CD14-positive monocyte (primary cell): ENCODE measurements at regions of chr20 and their contacts with region 1.

Region 1: DNA sequence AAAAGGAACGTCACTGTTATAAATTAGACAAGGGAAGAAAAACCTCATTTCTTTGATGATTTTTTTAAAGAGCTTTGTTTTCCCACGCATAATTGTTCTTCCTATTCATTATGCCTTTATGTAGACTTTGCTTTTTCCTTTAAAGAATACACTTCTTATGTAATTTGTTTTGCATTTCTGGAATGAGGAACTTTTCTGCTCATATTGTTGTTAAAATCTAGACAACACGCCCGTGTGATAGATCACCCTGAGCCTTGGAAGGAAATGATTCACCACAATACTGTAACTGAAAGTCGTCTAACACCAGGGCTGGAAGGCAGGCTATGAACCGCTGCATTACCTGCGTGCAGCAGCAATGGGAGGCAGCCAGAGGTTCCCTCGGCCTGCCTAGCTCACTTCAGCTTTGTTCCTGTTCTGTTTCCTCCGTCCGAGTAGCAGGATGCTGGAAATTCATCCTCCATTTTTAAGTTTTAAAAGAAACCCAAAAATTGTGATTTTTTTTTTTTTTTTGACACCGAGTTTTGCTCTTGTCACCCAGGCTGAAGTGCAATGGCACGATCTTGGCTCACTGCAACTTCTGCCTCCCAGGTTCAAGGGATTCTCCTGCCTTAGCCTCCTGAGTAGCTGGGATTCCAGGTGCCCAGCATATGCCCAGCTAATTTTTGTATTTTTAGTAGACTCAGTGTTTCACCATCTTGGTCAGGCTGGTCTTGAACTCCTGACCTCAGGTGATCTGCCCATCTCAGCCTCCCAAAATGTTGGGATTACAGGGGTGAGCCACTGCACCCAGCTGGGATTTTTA is 49.6 kb upstream of the ZNF217 start:
- DNase-seq: peak; percentile 88 to 97 (median 92)
- H3K4me3 ChIP-seq: peak overlapping the region; percentile 24 to 64 (median 41)
- H3K4me3 Mint-ChIP-seq: peak overlapping the region; percentile 70 to 83
- H3K27ac ChIP-seq: peak overlapping the region; percentile 80 to 96
- H3K27ac Mint-ChIP-seq: peak overlapping the region; percentile 94 to 98 (median 96)
- H3K4me1 ChIP-seq: peaks cover 48 to 68% of the 10 kb centered on the region in 2 donors
- H3K4me1 Mint-ChIP-seq: peaks cover 56% of the 10 kb centered on the region
- H3K27me3 ChIP-seq: no peaks in the 10 kb centered on the region
- H3K27me3 Mint-ChIP-seq: no peaks in the 10 kb centered on the region
- CTCF ChIP-seq: no peak

Region 2: DNA sequence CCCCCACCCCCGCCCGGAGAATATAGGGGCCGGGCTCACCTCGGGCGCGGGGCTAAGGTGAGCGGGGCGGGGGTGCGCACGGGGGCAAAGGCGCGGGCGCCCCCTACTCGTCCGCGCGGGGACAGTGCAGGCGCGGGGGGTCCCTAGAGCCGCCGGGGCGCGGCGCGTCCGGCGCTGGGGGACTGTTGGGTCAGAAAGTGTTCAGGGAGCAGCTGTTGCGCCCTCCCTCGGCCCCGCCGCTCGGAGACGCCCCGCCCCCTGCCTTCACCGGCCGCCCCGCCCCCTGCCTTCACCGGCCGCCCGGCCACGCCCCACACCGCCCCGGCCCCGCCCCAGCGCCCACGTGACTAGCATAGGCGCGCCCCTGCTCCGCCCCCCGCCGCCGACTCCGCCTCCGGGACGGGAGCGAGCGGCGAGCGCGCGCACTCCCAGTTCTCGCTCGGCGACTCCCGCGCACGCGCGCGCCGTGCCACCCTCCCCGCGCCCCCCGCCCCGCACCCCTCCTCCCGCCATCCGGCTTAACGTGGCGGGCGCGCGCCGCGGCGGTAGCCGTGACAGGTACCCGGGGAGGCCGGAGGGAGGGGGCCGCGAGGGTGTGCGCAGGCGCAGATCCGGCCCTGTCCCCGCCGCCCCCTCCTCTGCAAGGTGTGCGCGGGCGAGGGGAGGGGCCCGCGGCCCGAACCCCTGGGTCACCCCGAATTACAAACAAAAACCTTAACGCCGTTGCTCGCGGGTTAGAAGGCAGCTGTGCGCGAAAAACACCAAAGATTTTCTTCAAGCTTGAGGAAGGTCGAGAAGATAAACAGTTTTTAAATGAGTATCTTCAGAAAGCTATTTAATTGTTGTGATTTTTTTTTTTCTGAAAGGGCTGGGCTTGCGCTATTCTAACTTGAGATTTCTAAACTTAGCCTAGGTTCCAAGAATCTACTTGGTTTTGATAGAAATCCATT is 48.9 kb before region 1 on chr20:
- intact Hi-C with region 1: loop called in 1 of 2 experiments (anchors 5 kb)
- DNase-seq: peak; percentile 84 to 92 (median 84)
- H3K4me3 ChIP-seq: peak overlapping the region; percentile 66 to 100 (median 89)
- H3K4me3 Mint-ChIP-seq: peak overlapping the region; percentile 88 to 90
- H3K27ac ChIP-seq: peak overlapping the region; percentile 85 to 95
- H3K27ac Mint-ChIP-seq: peak overlapping the region; percentile 85 to 96 (median 90)
- H3K4me1 ChIP-seq: peaks cover 31 to 57% of the 10 kb centered on the region in 2 donors
- H3K4me1 Mint-ChIP-seq: peaks cover 46% of the 10 kb centered on the region
- H3K27me3 ChIP-seq: no peaks in the 10 kb centered on the region
- H3K27me3 Mint-ChIP-seq: no peaks in the 10 kb centered on the region
- CTCF ChIP-seq: no peak

Region 3: GRCh38 chr20:53623454-53624211 is 19.6 kb before region 1 on chr20:
- intact Hi-C with region 1: no loop called
- DNase-seq: peak; percentile 62 to 82 (median 78)
- H3K4me3 ChIP-seq: peak overlapping the region; percentile 36 to 76 (median 76)
- H3K4me3 Mint-ChIP-seq: peak overlapping the region; percentile 75 to 86
- H3K27ac ChIP-seq: peak overlapping the region; percentile 71 to 96
- H3K27ac Mint-ChIP-seq: peak overlapping the region; percentile 88 to 96 (median 93)
- H3K4me1 ChIP-seq: peaks cover 56 to 63% of the 10 kb centered on the region in 2 donors
- H3K4me1 Mint-ChIP-seq: peaks cover 45% of the 10 kb centered on the region
- H3K27me3 ChIP-seq: no peaks in the 10 kb centered on the region
- H3K27me3 Mint-ChIP-seq: no peaks in the 10 kb centered on the region
- CTCF ChIP-seq: no peak

Region 4: GRCh38 chr20:53692413-53693067 is 49.3 kb after region 1 on chr20:
- intact Hi-C with region 1: loop called in 1 of 2 experiments (anchors 10 kb)
- DNase-seq: peak; percentile 63 to 72 (median 64)
- H3K4me3 ChIP-seq: peak overlapping the region in 1 of 3 experiments; percentile 27
- H3K4me3 Mint-ChIP-seq: peak overlapping the region; percentile 24 to 76
- H3K27ac ChIP-seq: peak overlapping the region in 1 of 2 donors; percentile 58
- H3K27ac Mint-ChIP-seq: peak overlapping the region in 3 of 7 donors; percentile 40 to 70 (median 68)
- H3K4me1 ChIP-seq: peaks cover 27 to 33% of the 10 kb centered on the region in 2 donors
- H3K4me1 Mint-ChIP-seq: peaks cover 26% of the 10 kb centered on the region
- H3K27me3 ChIP-seq: no peaks in the 10 kb centered on the region
- H3K27me3 Mint-ChIP-seq: peaks cover 0 to 6% (median 0%) of the 10 kb centered on the region in 3 donors
- CTCF ChIP-seq: no peak

Region 5: DNA sequence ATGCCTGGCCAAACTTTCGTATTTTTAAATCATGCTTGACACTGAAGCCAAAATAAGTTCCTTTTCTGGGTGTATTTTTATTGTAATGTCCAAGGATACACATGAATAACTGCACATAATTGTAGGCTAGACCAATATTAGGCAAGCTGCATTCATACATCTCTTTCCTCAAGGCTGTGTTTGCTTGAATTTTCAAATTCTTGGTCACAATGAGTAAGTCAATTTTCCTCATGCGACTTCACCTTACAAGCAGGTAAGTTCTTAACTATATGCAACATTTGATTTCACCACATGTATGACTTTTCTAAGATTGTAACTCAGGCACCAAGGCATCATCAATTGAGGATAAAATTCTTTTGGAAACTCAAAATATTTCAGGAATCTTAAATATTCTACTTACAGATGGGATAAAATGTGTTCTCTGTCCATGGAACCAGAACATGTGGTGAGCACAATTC is 62.8 kb after region 1 on chr20:
- intact Hi-C with region 1: no loop called
- DNase-seq: no peak
- H3K4me3 ChIP-seq: no peak overlapping the region
- H3K4me3 Mint-ChIP-seq: no peak overlapping the region
- H3K27ac ChIP-seq: peak overlapping the region in 1 of 2 donors; percentile 88
- H3K27ac Mint-ChIP-seq: peak overlapping the region in 2 of 7 donors; percentile 75 to 89
- H3K4me1 ChIP-seq: peaks cover 39 to 43% of the 10 kb centered on the region in 2 donors
- H3K4me1 Mint-ChIP-seq: peaks cover 44% of the 10 kb centered on the region
- H3K27me3 ChIP-seq: no peaks in the 10 kb centered on the region
- H3K27me3 Mint-ChIP-seq: peaks cover 0 to 3% (median 2%) of the 10 kb centered on the region in 3 donors
- CTCF ChIP-seq: no peak

Region 6: GRCh38 chr20:54148947-54149503 is 505.8 kb after region 1 on chr20:
- intact Hi-C with region 1: no loop called
- DNase-seq: no peak
- H3K4me3 ChIP-seq: no peak overlapping the region
- H3K4me3 Mint-ChIP-seq: peak overlapping the region in 1 of 2 donors; percentile 4
- H3K27ac ChIP-seq: no peak overlapping the region
- H3K27ac Mint-ChIP-seq: no peak overlapping the region
- H3K4me1 ChIP-seq: no peaks in the 10 kb centered on the region
- H3K4me1 Mint-ChIP-seq: no peaks in the 10 kb centered on the region
- H3K27me3 ChIP-seq: no peaks in the 10 kb centered on the region
- H3K27me3 Mint-ChIP-seq: peaks cover 2 to 11% (median 7%) of the 10 kb centered on the region in 3 donors
- CTCF ChIP-seq: no peak